ENCODE measurements at regions of chr4 and their contacts with region 1.

Region 1: DNA sequence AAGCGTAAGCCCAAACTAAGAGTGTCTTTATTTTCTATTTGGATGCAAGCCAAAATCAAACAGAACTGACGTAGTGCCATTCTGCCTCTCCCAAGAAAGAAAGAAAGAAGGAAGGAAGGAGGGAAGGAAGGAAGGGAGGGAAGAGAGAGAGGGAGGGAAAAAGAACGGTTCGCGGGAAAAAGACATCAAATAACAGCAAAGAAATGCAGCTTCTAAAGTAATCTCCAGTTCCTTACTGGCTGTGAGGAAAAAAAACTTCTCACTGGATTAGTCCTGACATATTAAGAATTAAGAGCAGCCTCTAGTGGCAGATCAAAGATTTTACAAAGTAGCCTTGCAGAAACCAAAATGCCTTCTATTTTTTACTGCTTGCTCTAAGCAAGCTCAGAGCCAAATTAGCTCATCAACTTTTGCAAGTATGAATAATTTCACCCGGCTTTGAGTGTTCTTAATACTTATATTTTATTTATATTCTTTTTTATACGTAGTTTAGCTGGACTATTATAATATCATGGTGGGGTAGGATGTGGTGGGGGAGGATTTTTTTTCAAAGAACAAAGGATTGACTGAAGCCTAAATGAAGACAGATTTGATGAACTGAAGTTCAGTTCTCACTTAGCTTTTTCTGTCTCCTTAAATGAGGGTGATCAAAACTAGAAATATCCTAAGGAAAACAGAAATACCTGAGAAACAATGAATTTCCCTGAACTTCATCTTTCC is 36.6 kb downstream of the PITX2 start:
- DNase-seq: peak; percentile 68
- H3K4me3 Mint-ChIP-seq: peak overlapping the region; percentile 63
- H3K27ac Mint-ChIP-seq: peak overlapping the region; percentile 13
- H3K4me1 Mint-ChIP-seq: no peaks in the 10 kb centered on the region
- H3K27me3 Mint-ChIP-seq: no peaks in the 10 kb centered on the region
- CTCF ChIP-seq: peak; percentile 60

Region 2: DNA sequence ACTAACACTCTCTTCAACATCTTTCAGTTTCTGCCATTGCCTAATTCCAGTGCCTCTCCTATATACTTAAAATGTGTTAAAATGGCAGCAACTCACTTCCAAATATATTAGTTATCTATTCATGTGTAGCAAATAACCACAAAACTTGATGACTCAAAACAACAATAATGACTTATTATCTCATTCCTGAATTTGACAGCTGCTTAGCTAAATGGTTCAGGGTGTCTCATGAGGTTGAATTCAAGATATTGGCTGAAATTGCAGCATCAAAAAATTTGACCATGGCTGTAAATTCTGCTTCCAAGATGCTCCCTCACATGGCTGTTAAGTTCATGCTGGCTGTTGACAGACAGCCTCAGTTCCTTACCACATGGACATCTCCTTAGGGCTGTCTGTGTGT is 11.3 kb after region 1 on chr4:
- CTCF ChIA-PET with region 1: interaction called, 18 read pairs
- POLR2A ChIA-PET with region 1: no interaction called
- intact Hi-C with region 1: no loop called
- DNase-seq: no peak
- H3K4me3 Mint-ChIP-seq: no peak overlapping the region
- H3K27ac Mint-ChIP-seq: no peak overlapping the region
- H3K4me1 Mint-ChIP-seq: no peaks in the 10 kb centered on the region
- H3K27me3 Mint-ChIP-seq: no peaks in the 10 kb centered on the region
- CTCF ChIP-seq: no peak

Region 3: GRCh38 chr4:110754726-110755125 is 168.4 kb after region 1 on chr4:
- CTCF ChIA-PET with region 1: no interaction called
- POLR2A ChIA-PET with region 1: no interaction called
- intact Hi-C with region 1: no loop called
- DNase-seq: peak; percentile 17
- H3K4me3 Mint-ChIP-seq: no peak overlapping the region
- H3K27ac Mint-ChIP-seq: no peak overlapping the region
- H3K4me1 Mint-ChIP-seq: no peaks in the 10 kb centered on the region
- H3K27me3 Mint-ChIP-seq: peaks cover 44% of the 10 kb centered on the region
- CTCF ChIP-seq: no peak